Posterior vena cava (tissue), 2 donors: ENCODE measurements at regions of chr4 and their contacts with region 1.

Region 1: GRCh38 chr4:83413676-83414075 is 41.9 kb downstream of the HELQ start:
- DNase-seq: no peak

Region 2: GRCh38 chr4:83369831-83370639 is 43.6 kb before region 1 on chr4:
- intact Hi-C with region 1: loop called in 1 of 2 experiments (anchors 1 kb)
- DNase-seq: no peak